Activated T-helper 2 cell treated with anti-CD3 and anti-CD28 coated beads, Interferon-gamma antibody, Interleukin-2, Interleukin-4, amounts not matched to agents 10 μg/mL and 5 μg/mL and 100 μg/mL, durations not matched to agents 14 hours and 24 hours and 36 hours (primary cell): ENCODE measurements at regions of chr2 and their contacts with region 1.

Region 1: DNA sequence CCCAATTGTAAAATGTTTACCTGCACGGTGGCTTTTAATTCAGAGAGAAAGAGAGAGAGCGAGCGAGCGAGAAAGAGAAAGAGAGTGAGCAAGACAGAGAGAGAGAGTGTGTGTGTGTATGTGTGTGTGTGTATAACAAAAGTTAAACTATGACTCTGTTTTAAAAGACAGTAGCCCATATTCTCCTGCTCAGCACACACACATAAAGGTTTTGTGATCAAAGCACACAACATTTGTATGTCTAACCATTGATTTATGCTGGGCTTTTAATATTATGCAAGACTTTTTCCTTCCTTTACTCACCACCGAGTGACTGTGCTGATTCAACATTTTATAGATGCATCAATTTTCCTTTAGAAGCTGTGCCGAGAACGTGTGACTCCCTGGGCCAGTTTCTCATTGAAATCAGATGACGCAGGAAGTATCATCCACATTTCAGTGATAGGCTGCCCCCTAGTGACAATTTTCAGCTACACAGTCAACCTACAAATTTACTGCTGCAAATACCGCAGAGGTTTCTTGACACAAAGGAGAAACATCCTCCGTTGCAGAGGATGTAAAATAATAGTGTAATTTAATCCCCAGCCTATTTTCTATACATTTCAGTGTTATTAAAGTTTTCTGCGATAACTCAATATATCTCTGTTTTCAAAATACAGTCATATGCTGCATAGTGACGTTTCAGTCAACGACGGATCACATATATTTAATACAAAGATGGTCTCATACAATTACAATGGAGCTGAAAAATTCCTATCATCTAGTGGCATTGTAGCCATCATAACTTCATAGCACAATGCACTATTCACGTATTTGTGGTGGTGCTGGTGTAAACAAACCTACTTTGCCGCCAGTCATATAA is 165.9 kb upstream of the TANK start:
- DNase-seq: peak; percentile 55
- H3K4me3 Mint-ChIP-seq: no peak overlapping the region
- H3K27ac Mint-ChIP-seq: no peak overlapping the region
- H3K4me1 Mint-ChIP-seq: peaks cover 5% of the 10 kb centered on the region
- H3K27me3 Mint-ChIP-seq: peaks cover 6% of the 10 kb centered on the region

Region 2: DNA sequence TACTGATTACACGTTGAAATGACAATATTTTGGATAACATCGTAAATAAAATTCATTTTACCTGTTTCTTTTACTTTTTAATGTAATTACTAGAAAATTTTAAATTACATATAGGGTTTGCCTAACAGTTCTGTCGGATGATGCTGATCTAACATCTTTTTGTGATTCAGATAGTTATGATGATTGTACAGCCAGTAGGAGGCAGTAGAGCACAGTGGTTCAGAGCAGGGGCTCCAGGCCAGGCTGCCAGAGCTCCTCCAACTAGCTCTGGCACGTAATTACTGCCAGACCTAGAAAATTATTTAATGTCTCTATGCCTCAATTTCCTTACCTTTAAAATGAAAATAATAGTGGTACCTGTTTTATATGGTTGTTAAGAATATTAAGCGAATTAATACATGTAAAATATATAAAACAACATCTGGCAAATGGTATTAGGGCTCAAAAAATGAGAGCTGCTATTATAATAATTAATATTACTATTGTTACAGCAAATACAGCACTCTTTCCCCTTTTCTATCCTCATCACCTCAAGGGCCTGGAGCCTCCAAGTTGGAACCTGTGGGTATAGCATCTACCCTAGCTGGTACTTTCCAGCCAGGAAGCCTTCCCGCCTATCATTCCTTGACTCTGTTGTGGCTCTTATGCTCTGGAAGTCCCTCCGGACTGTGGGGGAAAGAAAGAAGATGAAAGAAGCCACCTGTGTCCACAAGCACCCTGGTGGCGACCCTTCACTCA is 884.3 kb before region 1 on chr2:
- intact Hi-C with region 1: loop called (anchors 1 kb)
- DNase-seq: peak; percentile 14
- H3K4me3 Mint-ChIP-seq: no peak overlapping the region
- H3K27ac Mint-ChIP-seq: no peak overlapping the region
- H3K4me1 Mint-ChIP-seq: no peaks in the 10 kb centered on the region
- H3K27me3 Mint-ChIP-seq: peaks cover 3% of the 10 kb centered on the region

Region 3: DNA sequence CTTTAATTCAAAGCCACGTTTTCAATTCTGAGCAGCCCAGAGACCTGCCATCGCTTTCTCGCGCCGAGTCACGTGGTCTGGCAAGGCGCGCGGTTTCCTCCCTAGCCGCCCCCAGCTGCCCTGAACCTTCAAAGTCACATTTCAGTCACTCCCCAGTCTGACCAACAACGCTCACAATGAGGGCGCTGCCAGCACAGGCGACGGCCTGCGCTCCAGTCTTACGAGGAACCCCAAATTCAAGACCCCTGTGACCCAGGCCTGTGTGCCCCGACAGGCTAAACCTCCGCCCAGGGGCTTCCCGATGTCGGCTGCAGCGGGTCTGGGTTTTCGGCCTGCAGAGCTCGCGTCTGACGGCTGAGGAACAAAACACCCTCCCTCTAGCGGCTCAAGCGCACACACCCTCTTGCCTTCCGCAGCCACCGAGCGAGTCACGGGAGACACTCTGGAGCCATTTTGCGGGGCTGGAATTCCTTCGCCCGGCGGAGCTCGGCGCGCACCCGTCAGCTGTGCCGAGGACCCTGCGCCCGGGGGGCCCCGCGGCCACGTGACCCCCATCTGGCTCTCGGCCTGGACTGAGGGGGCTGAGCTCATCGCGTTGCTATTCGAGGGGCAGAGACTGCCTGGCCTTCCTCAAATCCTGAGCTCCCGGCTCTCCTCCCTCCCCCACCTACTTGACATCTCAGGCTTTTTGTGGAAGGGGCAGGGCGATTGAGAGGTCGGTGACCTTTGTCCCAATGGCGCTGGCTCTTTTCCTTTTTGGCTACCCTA is 724.4 kb before region 1 on chr2:
- intact Hi-C with region 1: loop called (anchors 5 kb)
- DNase-seq: peak; percentile 31
- H3K4me3 Mint-ChIP-seq: peak overlapping the region; percentile 56
- H3K27ac Mint-ChIP-seq: no peak overlapping the region
- H3K4me1 Mint-ChIP-seq: peaks cover 45% of the 10 kb centered on the region
- H3K27me3 Mint-ChIP-seq: peaks cover 22% of the 10 kb centered on the region

Region 4: DNA sequence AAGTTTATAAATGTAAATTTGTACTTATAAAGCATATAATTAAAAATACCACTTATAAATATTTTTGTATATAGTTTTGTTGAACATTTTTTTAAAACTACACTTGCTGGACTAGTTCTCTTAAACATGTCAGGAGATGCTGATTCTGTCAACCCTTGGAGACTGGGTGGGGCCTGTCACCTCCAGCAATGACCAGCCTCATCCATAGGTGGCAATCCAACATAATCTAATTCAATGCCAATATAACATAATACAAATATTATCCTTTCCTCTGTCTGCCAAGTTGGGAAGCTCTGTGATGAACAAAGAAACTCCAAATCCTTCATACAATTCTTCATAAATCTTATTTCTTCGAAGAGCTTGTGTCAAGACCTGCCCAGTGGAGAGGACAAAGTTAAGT is 641.2 kb before region 1 on chr2:
- intact Hi-C with region 1: loop called (anchors 10 kb)
- DNase-seq: no peak
- H3K4me3 Mint-ChIP-seq: no peak overlapping the region
- H3K27ac Mint-ChIP-seq: no peak overlapping the region
- H3K4me1 Mint-ChIP-seq: peaks cover 26% of the 10 kb centered on the region
- H3K27me3 Mint-ChIP-seq: no peaks in the 10 kb centered on the region

Region 5: DNA sequence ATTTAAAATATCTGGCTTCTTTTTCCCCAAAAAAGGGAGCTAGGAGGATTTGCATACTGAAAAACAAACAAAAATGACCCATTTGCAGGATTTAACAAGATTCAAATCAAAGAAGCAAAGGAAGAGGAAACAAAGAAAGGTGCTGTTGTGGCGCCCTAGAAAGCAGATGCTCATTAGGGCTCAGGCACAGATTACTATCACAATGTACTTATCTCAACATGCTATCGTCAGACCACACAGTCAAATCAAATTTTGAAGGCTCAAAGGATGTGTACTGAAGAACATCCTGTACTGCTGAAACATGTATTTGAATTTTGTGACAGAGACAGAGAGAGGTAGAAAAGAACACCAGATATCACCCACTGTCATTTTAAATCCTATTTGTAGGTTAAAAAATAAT is 511.7 kb before region 1 on chr2:
- intact Hi-C with region 1: no loop called
- DNase-seq: peak; percentile 41
- H3K4me3 Mint-ChIP-seq: no peak overlapping the region
- H3K27ac Mint-ChIP-seq: peak overlapping the region; percentile 63
- H3K4me1 Mint-ChIP-seq: peaks cover 55% of the 10 kb centered on the region
- H3K27me3 Mint-ChIP-seq: no peaks in the 10 kb centered on the region

Region 6: DNA sequence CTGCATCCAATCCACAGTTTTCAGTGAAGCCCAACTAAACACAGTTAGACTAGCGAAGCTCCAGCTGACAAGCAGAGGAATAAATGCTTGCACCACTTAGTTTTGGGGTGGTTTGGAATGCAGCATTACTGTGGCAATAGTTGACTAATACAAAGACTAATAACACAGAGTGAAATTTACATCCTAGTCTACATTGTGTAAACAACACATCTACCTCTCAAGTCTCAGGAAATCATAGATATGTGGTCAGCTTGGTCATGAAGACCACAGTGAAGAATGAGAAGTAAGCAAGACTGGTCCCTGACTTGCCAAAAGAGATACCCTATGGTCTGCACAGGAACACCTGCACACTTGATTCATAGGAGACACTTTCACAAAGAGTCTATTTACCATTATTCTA is 10.8 kb after region 1 on chr2:
- intact Hi-C with region 1: no loop called
- DNase-seq: no peak
- H3K4me3 Mint-ChIP-seq: no peak overlapping the region
- H3K27ac Mint-ChIP-seq: no peak overlapping the region
- H3K4me1 Mint-ChIP-seq: no peaks in the 10 kb centered on the region
- H3K27me3 Mint-ChIP-seq: peaks cover 20% of the 10 kb centered on the region

Region 7: DNA sequence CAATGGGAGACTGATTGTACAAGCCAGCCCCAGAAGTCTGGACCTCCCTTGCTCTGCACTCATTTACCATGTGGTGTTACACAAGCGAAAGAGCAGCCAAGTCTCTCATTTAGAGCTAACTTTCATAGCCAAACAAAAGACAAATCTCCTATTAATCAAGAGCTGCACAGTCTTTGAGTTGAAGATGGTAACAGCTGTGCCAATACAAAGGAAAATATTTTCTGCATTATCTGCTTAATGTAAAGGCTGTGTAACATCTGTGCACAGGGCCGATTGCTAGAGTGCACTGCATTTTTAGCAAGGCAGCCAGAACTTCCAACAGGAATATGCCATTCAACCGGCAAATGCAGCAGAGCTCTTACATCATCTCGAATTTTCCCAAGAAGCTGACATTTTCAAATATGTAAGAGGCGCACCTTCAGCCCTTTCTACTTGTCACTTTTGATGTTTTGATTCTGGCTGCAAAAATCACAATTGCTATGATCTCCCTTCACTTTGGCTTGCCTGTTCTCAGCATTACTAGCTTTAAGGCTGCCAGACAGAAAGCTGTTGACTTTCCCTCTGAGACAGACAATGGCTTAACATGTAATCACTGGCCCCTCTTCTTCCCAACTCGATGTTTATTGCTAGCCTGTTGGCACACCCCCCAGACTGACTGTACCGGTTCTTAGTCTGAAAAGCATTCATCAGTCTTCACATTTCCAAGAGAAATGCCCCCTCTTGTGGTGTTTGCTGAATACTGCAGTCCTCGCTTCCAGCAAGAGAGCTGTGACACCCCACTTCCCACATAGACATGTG is 69.0 kb after region 1 on chr2:
- intact Hi-C with region 1: loop called (anchors 1 kb)
- DNase-seq: peak; percentile 47
- H3K4me3 Mint-ChIP-seq: no peak overlapping the region
- H3K27ac Mint-ChIP-seq: no peak overlapping the region
- H3K4me1 Mint-ChIP-seq: peaks cover 11% of the 10 kb centered on the region
- H3K27me3 Mint-ChIP-seq: peaks cover 7% of the 10 kb centered on the region